ENCODE measurements at regions of chr6 and their contacts with region 1.

Region 1: GRCh38 chr6:43228951-43229802 is at the start of gene DNPH1:
- DNase-seq: peak; percentile 65 to 91 (median 81)
- ATAC-seq: peak; percentile 84
- H3K4me3 ChIP-seq: peak within 1 kb of the TSS; percentile 53
- H3K4me3 Mint-ChIP-seq: peak within 1 kb of the TSS; percentile 87 to 95 (median 91)
- H3K27ac ChIP-seq: peak within 1 kb of the TSS; percentile 88
- H3K27ac Mint-ChIP-seq: peak within 1 kb of the TSS; percentile 92 to 98 (median 95)
- H3K4me1 ChIP-seq: peaks cover 5 to 24% of the 10 kb centered on the region in 2 donors
- H3K4me1 Mint-ChIP-seq: peaks cover 28 to 48% (median 40%) of the 10 kb centered on the region in 7 donors
- H3K27me3 ChIP-seq: no peaks in the 10 kb centered on the region
- H3K27me3 Mint-ChIP-seq: peaks cover 0 to 16% (median 0%) of the 10 kb centered on the region in 5 donors
- total RNA-seq, gene DNPH1: 25.4 to 65.7 (median 33.9) TPM

Region 2: GRCh38 chr6:43181942-43182860 is 47.0 kb before region 1 on chr6 and contains the start of gene CUL9:
- CTCF ChIA-PET with region 1: interaction called, 4 read pairs
- POLR2A ChIA-PET with region 1: interaction called, 8 read pairs
- intact Hi-C with region 1: loop called (anchors 1 to 2 kb)
- DNase-seq: peak; percentile 71 to 88 (median 75)
- ATAC-seq: peak; percentile 98
- H3K4me3 ChIP-seq: peak within 1 kb of the TSS; percentile 81
- H3K4me3 Mint-ChIP-seq: peak within 1 kb of the TSS; percentile 88 to 99 (median 93)
- H3K27ac ChIP-seq: peak within 1 kb of the TSS; percentile 87
- H3K27ac Mint-ChIP-seq: peak within 1 kb of the TSS; percentile 86 to 97 (median 94)
- H3K4me1 ChIP-seq: peaks cover 34 to 51% of the 10 kb centered on the region in 2 donors
- H3K4me1 Mint-ChIP-seq: peaks cover 43 to 60% (median 57%) of the 10 kb centered on the region in 7 donors
- H3K27me3 ChIP-seq: no peaks in the 10 kb centered on the region
- H3K27me3 Mint-ChIP-seq: no peaks in the 10 kb centered on the region
- total RNA-seq, gene CUL9: 58.1 to 123 (median 111) TPM

Region 3: GRCh38 chr6:43274916-43275597 is 45.9 kb after region 1 on chr6:
- CTCF ChIA-PET with region 1: no interaction called
- POLR2A ChIA-PET with region 1: interaction called, 4 read pairs
- intact Hi-C with region 1: loop called in 1 of 2 experiments (anchors 1 kb)
- DNase-seq: peak in 7 of 9 donors; percentile 7 to 45 (median 18)
- ATAC-seq: peak; percentile 19
- H3K4me3 ChIP-seq: peak overlapping the region; percentile 40
- H3K4me3 Mint-ChIP-seq: peak overlapping the region; percentile 69 to 95 (median 85)
- H3K27ac ChIP-seq: peak overlapping the region; percentile 8
- H3K27ac Mint-ChIP-seq: peak overlapping the region in 1 of 9 donors; percentile 8
- H3K4me1 ChIP-seq: peaks cover 0 to 6% of the 10 kb centered on the region in 2 donors
- H3K4me1 Mint-ChIP-seq: peaks cover 5 to 20% (median 5%) of the 10 kb centered on the region in 7 donors
- H3K27me3 ChIP-seq: no peaks in the 10 kb centered on the region
- H3K27me3 Mint-ChIP-seq: peaks cover 0 to 75% (median 6%) of the 10 kb centered on the region in 5 donors

Region 4: GRCh38 chr6:43297644-43298564 is 68.7 kb after region 1 on chr6 and contains the start of gene SLC22A7:
- CTCF ChIA-PET with region 1: no interaction called
- POLR2A ChIA-PET with region 1: no interaction called
- intact Hi-C with region 1: no loop called
- DNase-seq: no peak
- ATAC-seq: no peak
- H3K4me3 ChIP-seq: no peak within 1 kb of the TSS
- H3K4me3 Mint-ChIP-seq: no peak within 1 kb of the TSS
- H3K27ac ChIP-seq: no peak within 1 kb of the TSS
- H3K27ac Mint-ChIP-seq: no peak within 1 kb of the TSS
- H3K4me1 ChIP-seq: no peaks in the 10 kb centered on the region
- H3K4me1 Mint-ChIP-seq: peaks cover 0 to 7% (median 0%) of the 10 kb centered on the region in 7 donors
- H3K27me3 ChIP-seq: no peaks in the 10 kb centered on the region
- H3K27me3 Mint-ChIP-seq: peaks cover 0 to 9% (median 7%) of the 10 kb centered on the region in 5 donors
- total RNA-seq, gene SLC22A7: not detected

Region 5: DNA sequence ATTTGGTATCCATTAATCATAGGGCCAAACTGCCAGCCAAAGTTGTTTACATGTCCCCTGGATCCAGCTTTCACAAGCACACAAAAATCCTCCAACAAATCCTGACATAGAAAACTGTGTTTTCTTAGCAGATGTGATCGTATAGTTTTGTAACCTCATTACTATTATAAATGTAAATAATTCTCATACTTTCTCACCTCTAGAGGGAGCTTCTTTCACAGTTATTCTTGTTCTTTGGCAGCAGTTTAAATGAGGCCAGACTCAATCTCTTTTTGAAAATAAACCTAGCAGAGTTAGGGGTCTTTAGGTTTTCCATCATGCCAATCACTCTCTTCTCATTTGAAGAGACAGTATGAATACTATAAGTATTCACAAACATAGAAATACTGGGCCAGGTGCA is 157.3 kb after region 1 on chr6:
- CTCF ChIA-PET with region 1: interaction called, 3 read pairs
- POLR2A ChIA-PET with region 1: interaction called, 3 read pairs
- intact Hi-C with region 1: loop called in 1 of 2 experiments (anchors 1 kb)
- DNase-seq: peak in 3 of 9 donors; percentile 43 to 64 (median 44)
- ATAC-seq: no peak
- H3K4me3 ChIP-seq: no peak overlapping the region
- H3K4me3 Mint-ChIP-seq: peak overlapping the region in 4 of 10 donors; percentile 23 to 63 (median 40)
- H3K27ac ChIP-seq: no peak overlapping the region
- H3K27ac Mint-ChIP-seq: peak overlapping the region in 8 of 9 donors; percentile 6 to 95 (median 73)
- H3K4me1 ChIP-seq: peaks cover 46 to 59% of the 10 kb centered on the region in 2 donors
- H3K4me1 Mint-ChIP-seq: peaks cover 54 to 78% (median 72%) of the 10 kb centered on the region in 7 donors
- H3K27me3 ChIP-seq: no peaks in the 10 kb centered on the region
- H3K27me3 Mint-ChIP-seq: peaks cover 0 to 67% (median 4%) of the 10 kb centered on the region in 5 donors

Region 6: DNA sequence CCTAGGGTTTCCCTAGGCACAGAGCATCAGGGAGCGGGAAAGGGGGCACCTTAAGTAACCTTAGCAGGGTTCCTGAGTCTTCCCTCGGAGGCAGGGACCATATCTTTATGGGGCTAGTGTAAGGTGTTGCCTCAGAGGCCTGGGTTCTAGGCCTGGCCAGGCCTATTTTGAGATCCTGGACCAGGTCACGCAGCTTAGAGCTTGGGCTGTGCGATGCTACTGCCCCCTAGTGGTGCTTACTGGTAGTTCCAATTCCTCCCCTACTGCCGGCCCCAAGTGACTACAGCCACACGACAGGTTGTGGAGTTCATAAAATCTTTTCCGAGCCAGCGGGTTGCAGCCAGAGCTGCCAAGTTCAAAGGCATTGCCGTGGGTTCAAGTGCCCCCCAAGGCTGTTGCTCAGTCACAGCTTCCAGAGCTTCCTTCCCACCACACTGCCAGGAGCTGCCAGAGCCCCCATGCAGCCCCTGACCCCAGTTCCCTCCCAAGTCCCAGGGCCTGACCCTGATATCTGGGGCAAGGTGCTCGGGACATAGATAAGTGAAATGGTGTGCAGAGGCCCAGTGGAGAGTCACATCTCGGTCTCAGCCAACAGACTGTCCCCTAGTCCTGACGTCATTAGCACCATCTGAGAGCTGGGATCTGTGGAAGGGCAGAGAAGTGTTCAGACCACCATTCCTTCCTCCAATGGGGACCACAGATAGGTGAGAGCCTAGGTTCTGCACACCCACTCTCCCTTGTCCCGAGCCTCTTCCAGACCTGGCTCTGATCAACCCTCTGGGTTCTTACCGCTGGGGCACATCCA is 277.7 kb after region 1 on chr6:
- CTCF ChIA-PET with region 1: interaction called, 3 read pairs
- POLR2A ChIA-PET with region 1: no interaction called
- intact Hi-C with region 1: loop called in 1 of 2 experiments (anchors 1 kb)
- DNase-seq: peak; percentile 61 to 82 (median 70)
- ATAC-seq: peak; percentile 84
- H3K4me3 ChIP-seq: no peak overlapping the region
- H3K4me3 Mint-ChIP-seq: peak overlapping the region in 1 of 10 donors; percentile 29
- H3K27ac ChIP-seq: no peak overlapping the region
- H3K27ac Mint-ChIP-seq: peak overlapping the region in 5 of 9 donors; percentile 24 to 69 (median 58)
- H3K4me1 ChIP-seq: peaks cover 0 to 4% of the 10 kb centered on the region in 2 donors
- H3K4me1 Mint-ChIP-seq: peaks cover 10 to 29% (median 20%) of the 10 kb centered on the region in 7 donors
- H3K27me3 ChIP-seq: peaks cover 0 to 9% of the 10 kb centered on the region in 2 donors
- H3K27me3 Mint-ChIP-seq: peaks cover 15 to 22% (median 19%) of the 10 kb centered on the region in 5 donors